ENCODE measurements at regions of chr18 and their contacts with region 1.

Region 1: GRCh38 chr18:62714671-62715435 is 488 bp upstream of the PHLPP1 start:
- DNase-seq: peak; percentile 100

Region 2: DNA sequence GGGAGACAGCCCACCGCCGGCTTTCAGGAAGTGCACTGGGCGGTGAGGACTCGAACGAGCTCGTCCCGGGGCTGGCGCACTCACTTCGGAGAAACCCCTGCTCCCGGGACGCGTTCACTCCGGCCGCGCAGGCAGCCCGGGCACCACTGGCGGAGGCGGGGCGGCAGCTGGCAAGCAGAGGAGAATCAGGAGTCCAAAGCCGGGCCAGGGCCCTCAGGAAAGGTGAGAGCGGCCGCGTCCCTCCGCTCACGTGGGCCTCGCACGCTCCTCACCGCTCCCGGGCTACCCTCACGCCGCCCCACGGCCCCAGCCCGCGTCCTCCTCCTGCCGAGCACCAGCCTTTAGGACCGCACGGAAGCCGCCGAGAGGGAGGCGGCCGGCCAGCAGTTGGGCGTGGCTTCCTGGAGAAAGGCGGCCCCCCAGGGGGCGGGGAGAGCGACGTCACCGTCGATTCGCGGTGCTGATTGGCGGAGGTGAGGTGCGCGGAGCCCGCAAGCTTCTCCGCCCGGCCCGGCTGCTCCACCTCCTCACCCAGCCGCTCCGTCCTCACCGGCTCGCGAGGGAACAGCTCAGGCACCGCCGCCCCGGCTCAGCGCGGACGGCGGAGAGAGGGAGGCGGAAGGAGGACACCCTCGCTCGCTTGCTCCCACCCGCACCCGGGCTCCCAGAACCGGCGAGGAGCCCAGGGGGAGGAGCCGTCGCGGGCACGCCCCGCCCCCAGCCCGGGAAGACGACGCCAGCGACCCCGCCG is 192.2 kb before region 1 on chr18 and contains the start of gene ZCCHC2:
- intact Hi-C with region 1: loop called (anchors 5 kb)
- DNase-seq: peak; percentile 98 to 100 (median 99)

Region 3: GRCh38 chr18:62759704-62760402 is 45.0 kb after region 1 on chr18:
- intact Hi-C with region 1: loop called (anchors 5 kb)
- DNase-seq: no peak

Region 4: GRCh38 chr18:62844850-62845643 is 130.2 kb after region 1 on chr18:
- intact Hi-C with region 1: no loop called
- DNase-seq: no peak

Region 5: GRCh38 chr18:62982600-62983251 is 267.9 kb after region 1 on chr18:
- intact Hi-C with region 1: loop called (anchors 2 kb)
- DNase-seq: peak in 9 of 10 donors; percentile 42 to 91 (median 71)

Region 6: GRCh38 chr18:63422087-63422809 is 707.4 kb after region 1 on chr18 and contains the start of gene VPS4B:
- intact Hi-C with region 1: loop called (anchors 10 kb)
- DNase-seq: peak; percentile 99 to 100 (median 100)

Measured in posterior cingulate gyrus (tissue), 11 donors.